ENCODE measurements at regions of chr4 and their contacts with region 1.

Region 1: GRCh38 chr4:102500696-102501446 is at the start of gene NFKB1:
- DNase-seq: peak; percentile 64 to 95 (median 79)
- ATAC-seq: peak; percentile 85
- H3K4me3 ChIP-seq: peak within 1 kb of the TSS; percentile 96
- H3K4me3 Mint-ChIP-seq: peak within 1 kb of the TSS; percentile 93 to 98 (median 97)
- H3K27ac ChIP-seq: peak within 1 kb of the TSS; percentile 100
- H3K27ac Mint-ChIP-seq: peak within 1 kb of the TSS; percentile 95 to 99 (median 96)
- H3K4me1 ChIP-seq: peaks cover 6 to 22% of the 10 kb centered on the region in 2 donors
- H3K4me1 Mint-ChIP-seq: peaks cover 16 to 35% (median 31%) of the 10 kb centered on the region in 7 donors
- H3K27me3 ChIP-seq: no peaks in the 10 kb centered on the region
- H3K27me3 Mint-ChIP-seq: no peaks in the 10 kb centered on the region
- total RNA-seq, gene NFKB1: 80.9 to 167 (median 136) TPM

Region 2: DNA sequence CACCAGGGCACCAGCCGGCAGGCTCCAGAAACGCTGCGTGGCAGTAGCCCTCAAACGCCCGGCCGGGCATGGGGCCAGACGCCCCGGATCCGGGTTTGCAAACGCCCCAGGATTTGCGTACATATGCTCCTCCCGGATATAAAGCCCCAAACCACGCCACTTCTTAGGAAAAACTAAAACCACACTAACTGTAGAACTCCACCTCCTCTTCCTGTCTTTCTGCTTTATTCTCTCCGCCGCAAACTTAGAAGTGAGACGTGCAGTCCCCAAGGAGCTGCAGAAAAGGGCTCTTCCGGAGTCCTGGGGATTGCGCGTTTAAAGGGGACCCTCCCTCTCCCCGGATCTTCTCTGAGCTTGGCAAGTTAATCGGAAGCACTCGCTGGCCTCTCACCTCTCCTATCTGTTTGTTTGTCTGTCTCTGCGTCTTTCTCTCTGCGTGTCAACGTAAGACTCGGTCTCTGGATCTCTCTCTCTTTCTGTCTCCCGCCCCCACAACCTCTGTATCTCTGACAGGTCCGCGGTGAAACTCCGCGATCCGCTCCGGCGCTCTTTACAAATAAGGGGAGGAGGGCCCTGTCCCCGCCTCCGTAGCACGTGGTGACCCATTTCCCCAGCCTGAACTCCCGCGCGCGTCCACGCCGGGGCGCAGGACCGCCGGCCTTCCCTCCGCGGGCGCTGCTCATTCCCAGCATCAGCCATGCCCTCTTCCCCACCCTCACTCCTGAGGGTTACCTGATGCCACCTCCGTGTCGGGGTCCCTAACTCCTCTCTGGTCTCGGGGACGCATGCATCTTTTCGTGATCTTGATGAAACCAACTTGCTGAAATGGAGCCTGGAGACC is 155.7 kb before region 1 on chr4 and contains the start of gene SLC39A8:
- CTCF ChIA-PET with region 1: no interaction called
- POLR2A ChIA-PET with region 1: no interaction called
- intact Hi-C with region 1: loop called (anchors 1 kb)
- DNase-seq: peak; percentile 75 to 91 (median 89)
- ATAC-seq: peak; percentile 87
- H3K4me3 ChIP-seq: peak within 1 kb of the TSS; percentile 87
- H3K4me3 Mint-ChIP-seq: peak within 1 kb of the TSS; percentile 87 to 97 (median 90)
- H3K27ac ChIP-seq: peak within 1 kb of the TSS; percentile 95
- H3K27ac Mint-ChIP-seq: peak within 1 kb of the TSS; percentile 91 to 98 (median 95)
- H3K4me1 ChIP-seq: peaks cover 15 to 37% of the 10 kb centered on the region in 2 donors
- H3K4me1 Mint-ChIP-seq: peaks cover 24 to 51% (median 46%) of the 10 kb centered on the region in 7 donors
- H3K27me3 ChIP-seq: no peaks in the 10 kb centered on the region
- H3K27me3 Mint-ChIP-seq: peaks cover 0 to 7% (median 0%) of the 10 kb centered on the region in 5 donors
- total RNA-seq, gene SLC39A8: 15.1 to 99.5 (median 17.8) TPM

Region 3: DNA sequence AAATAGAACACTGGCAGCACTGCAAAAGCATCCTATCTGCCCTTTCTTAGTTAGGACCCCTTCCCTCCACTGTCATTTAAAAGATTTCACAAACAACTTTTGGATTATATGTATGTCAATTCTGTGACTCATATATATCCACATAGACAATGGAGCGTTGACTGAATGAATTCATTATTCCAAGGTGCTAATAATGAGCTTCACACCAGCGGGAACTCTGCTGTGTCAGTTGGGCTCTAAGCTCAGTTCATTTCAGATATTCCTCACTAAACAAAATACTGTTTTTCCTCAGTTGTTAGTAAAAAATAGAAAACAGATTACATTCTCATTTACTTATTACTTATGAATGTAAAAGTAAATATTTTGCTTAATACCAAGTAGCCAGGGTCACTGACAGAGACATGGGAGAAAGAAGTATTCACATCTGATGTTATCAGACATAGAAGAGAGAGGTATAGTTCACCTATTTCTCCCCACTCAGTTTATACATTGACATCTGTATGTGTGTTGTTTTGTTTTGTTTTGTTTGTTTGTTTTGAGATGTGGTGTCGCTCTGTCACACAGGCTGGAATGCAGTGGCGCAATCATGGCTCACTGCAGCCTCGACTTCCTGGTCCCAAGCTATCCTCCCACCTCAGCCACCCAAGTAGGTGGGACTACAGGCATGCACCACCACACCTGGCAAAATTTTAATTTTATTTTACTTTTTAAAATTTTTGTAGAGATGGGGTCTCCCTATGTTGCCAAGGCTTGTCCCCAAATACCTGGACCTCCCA is 11.1 kb after region 1 on chr4:
- CTCF ChIA-PET with region 1: interaction called, 4 read pairs
- POLR2A ChIA-PET with region 1: interaction called, 7 read pairs
- intact Hi-C with region 1: loop called in 1 of 2 experiments (anchors 1 kb)
- DNase-seq: no peak
- ATAC-seq: peak; percentile 15
- H3K4me3 ChIP-seq: no peak overlapping the region
- H3K4me3 Mint-ChIP-seq: no peak overlapping the region
- H3K27ac ChIP-seq: no peak overlapping the region
- H3K27ac Mint-ChIP-seq: peak overlapping the region in 2 of 9 donors; percentile 36 to 56
- H3K4me1 ChIP-seq: peaks cover 0 to 7% of the 10 kb centered on the region in 2 donors
- H3K4me1 Mint-ChIP-seq: peaks cover 37 to 84% (median 68%) of the 10 kb centered on the region in 7 donors
- H3K27me3 ChIP-seq: no peaks in the 10 kb centered on the region
- H3K27me3 Mint-ChIP-seq: no peaks in the 10 kb centered on the region

Region 4: DNA sequence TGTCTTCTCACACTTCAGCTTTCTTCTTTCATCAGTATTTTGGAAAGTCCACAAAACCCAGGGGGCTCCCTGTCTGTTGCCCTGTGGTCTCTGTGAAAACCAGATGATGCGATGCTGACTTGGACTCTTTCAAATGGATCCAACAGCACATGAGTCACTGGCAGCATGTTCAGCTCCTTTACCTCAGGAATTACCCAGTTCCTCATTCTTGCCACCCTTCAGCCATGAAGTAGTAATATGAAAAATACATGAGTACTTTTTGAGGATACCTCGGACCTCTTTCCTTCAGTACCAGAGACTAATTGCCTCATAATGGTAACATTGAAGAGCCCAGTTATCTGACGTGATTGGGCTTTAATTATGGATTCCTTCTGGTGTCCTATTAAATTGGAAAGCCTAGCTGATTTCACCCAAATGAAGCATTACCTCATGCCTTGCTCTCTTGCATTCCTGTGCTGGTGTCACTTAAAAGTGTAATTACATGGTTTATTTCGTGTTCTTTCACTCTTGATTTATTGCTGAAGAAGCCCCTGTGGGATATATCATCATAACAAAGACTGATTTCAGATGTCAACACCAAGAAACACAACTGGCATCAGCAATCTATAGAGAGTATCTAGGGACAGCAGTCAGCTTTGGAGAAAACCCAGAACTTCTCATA is 63.7 kb after region 1 on chr4:
- CTCF ChIA-PET with region 1: interaction called, 3 read pairs
- POLR2A ChIA-PET with region 1: interaction called, 3 read pairs
- intact Hi-C with region 1: loop called (anchors 2 to 10 kb)
- DNase-seq: no peak
- ATAC-seq: peak; percentile 58
- H3K4me3 ChIP-seq: no peak overlapping the region
- H3K4me3 Mint-ChIP-seq: peak overlapping the region in 1 of 10 donors; percentile 6
- H3K27ac ChIP-seq: no peak overlapping the region
- H3K27ac Mint-ChIP-seq: peak overlapping the region in 6 of 9 donors; percentile 8 to 73 (median 34)
- H3K4me1 ChIP-seq: peaks cover 10 to 41% of the 10 kb centered on the region in 2 donors
- H3K4me1 Mint-ChIP-seq: peaks cover 45 to 70% (median 53%) of the 10 kb centered on the region in 7 donors
- H3K27me3 ChIP-seq: no peaks in the 10 kb centered on the region
- H3K27me3 Mint-ChIP-seq: no peaks in the 10 kb centered on the region

Region 5: DNA sequence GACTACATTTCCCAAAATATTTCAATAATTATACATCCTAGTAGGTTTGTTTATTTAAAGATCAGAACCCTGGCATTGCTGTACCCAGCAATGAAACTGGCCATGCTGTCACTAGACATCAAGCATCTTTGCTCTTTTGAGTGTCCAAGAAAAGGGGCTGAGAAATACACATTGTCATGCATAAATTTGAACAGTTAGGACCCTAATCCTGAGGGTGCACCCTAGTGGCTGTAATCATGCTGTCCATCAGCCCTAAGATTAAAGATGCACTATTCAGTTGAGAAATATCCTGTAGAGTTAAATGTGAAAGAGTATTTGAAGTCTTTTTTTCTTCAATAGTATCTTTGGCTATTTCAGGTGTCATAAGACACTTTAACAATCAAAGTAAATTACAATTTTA is 109.1 kb after region 1 on chr4:
- CTCF ChIA-PET with region 1: interaction called, 3 read pairs
- POLR2A ChIA-PET with region 1: interaction called, 5 read pairs
- intact Hi-C with region 1: loop called (anchors 1 kb)
- DNase-seq: no peak
- ATAC-seq: no peak
- H3K4me3 ChIP-seq: no peak overlapping the region
- H3K4me3 Mint-ChIP-seq: peak overlapping the region in 1 of 10 donors; percentile 5
- H3K27ac ChIP-seq: no peak overlapping the region
- H3K27ac Mint-ChIP-seq: peak overlapping the region; percentile 10 to 97 (median 76)
- H3K4me1 ChIP-seq: peaks cover 38% of the 10 kb centered on the region in 2 donors
- H3K4me1 Mint-ChIP-seq: peaks cover 30 to 85% (median 67%) of the 10 kb centered on the region in 7 donors
- H3K27me3 ChIP-seq: no peaks in the 10 kb centered on the region
- H3K27me3 Mint-ChIP-seq: no peaks in the 10 kb centered on the region

Region 6: GRCh38 chr4:102826890-102827673 is 326.2 kb after region 1 on chr4 and contains the start of gene UBE2D3:
- CTCF ChIA-PET with region 1: no interaction called
- POLR2A ChIA-PET with region 1: interaction called, 8 read pairs
- intact Hi-C with region 1: loop called (anchors 1 kb)
- DNase-seq: peak; percentile 92 to 97 (median 95)
- ATAC-seq: peak; percentile 72
- H3K4me3 ChIP-seq: peak within 1 kb of the TSS; percentile 82
- H3K4me3 Mint-ChIP-seq: no peak within 1 kb of the TSS
- H3K27ac ChIP-seq: peak within 1 kb of the TSS; percentile 99
- H3K27ac Mint-ChIP-seq: no peak within 1 kb of the TSS
- H3K4me1 ChIP-seq: peaks cover 19 to 24% of the 10 kb centered on the region in 2 donors
- H3K4me1 Mint-ChIP-seq: peaks cover 24 to 46% (median 40%) of the 10 kb centered on the region in 7 donors
- H3K27me3 ChIP-seq: no peaks in the 10 kb centered on the region
- H3K27me3 Mint-ChIP-seq: peaks cover 0 to 2% (median 0%) of the 10 kb centered on the region in 5 donors
- total RNA-seq, gene UBE2D3: 339 to 556 (median 413) TPM

Region 7: DNA sequence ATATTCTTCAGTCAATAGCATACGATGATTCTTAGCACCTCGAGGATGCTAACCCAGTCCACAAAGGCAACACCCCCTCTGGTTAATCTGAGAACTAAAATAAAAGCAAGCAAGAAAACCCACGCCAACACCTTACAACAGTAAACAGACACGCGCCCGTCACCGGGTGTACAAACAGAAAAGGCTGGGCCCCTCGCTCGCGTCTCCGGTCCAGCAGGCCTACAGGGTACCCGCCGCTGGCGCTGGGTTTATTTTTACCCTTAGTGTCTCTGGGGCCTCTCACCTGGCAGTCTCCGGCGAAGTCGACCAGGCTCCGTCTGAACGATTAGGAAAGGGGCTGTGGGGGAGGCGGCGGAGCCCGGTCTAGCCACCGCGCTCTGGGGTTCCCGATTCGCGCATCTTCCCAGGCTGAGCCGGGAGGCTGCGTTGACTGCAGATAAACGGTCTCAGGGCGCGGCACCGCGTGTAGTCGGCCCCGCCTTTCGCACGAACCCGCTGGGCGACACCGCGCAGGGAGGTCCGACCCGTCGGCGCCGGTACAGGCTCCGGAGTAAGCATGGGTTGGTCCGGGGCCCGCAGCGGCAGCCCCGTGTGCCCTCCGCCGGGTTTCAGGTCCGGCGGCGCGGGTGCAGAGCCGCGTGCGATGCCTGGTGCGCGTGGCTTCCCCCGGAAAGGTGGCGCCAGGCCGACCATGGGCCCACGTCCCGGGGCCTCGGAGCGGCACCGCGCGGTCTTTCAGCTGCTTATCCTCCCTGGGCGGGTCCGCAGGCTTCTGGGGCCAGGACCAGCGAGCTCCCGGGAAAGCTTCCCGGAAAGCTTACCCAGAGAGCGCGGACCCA is 575.2 kb after region 1 on chr4:
- CTCF ChIA-PET with region 1: no interaction called
- POLR2A ChIA-PET with region 1: no interaction called
- intact Hi-C with region 1: loop called in 1 of 2 experiments (anchors 2 kb)
- DNase-seq: peak; percentile 53 to 75 (median 68)
- ATAC-seq: peak; percentile 83
- H3K4me3 ChIP-seq: peak overlapping the region; percentile 74
- H3K4me3 Mint-ChIP-seq: peak overlapping the region; percentile 77 to 97 (median 95)
- H3K27ac ChIP-seq: peak overlapping the region; percentile 87
- H3K27ac Mint-ChIP-seq: peak overlapping the region; percentile 86 to 99 (median 97)
- H3K4me1 ChIP-seq: peaks cover 10 to 17% of the 10 kb centered on the region in 2 donors
- H3K4me1 Mint-ChIP-seq: peaks cover 23 to 54% (median 47%) of the 10 kb centered on the region in 7 donors
- H3K27me3 ChIP-seq: no peaks in the 10 kb centered on the region
- H3K27me3 Mint-ChIP-seq: no peaks in the 10 kb centered on the region

Measured in naive thymus-derived CD4-positive, alpha-beta T cell (primary cell).